ENCODE measurements at regions of chr7 and their contacts with region 1.

Region 1: DNA sequence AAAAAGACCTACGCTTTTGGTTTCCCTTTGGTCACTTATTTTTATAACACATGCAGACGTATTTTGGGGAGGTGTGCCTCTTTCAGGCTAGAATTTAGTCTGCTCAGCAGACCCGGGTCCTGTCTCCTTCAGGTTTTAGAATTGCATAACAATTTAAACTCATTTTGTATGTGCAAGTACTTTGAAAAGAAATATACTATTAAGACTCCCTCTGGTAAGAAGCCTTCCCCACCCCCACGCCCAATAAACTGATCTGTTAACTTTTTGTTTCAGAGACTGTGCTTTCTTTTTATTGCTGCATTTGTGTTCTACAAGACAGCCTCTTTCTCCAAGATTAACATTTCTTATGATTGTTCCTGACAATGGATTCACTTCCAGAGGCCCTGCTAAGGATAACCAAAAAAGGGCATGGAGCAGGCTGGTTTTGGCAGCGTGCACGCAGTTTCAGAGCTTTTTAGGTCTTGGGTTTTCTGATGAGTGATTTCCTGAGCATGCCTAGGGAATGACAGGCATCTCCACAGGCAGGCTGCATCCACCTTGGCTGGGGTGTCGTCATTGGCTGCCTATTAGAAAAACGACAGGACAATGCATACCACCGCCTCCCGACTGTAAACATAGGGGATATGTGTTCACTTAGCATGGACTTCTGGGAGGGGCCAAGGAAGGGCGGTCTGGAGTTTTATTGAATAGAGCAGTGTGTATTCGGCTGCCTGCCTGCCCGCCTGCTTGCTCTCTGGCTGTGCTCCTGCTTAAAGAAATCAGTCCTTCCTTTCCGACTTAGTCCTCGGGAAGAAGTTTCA is at the start of gene CALD1:
- DNase-seq: peak; percentile 99
- H3K4me3 ChIP-seq: peak within 1 kb of the TSS; percentile 83
- CTCF ChIP-seq: no peak

Region 2: DNA sequence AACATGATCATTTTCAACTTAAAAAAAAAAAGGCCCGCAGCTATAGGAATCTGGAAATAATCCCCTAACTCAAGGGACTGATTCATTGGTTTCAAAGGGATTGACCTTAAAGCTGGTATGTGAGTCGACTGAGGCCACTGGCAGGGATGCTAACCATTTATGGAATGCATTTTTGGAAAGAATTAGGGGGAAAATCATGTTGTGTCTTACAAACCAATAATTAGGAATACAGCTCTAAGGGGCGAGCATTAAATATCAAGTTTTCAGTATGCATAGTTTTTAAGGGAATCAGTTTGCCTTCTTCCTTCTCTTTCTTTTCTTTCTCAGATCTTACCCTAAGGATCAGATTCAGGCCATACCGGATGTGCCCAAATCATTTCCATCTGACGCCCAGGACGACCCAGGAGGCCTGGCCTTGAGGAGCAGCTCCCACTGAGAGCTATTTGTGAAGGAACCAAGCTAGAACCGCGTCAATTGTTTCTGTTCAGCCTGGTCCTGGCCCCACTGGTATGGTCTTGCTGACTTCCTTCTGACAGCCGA is 83.8 kb before region 1 on chr7:
- CTCF ChIA-PET with region 1: interaction called, 80 read pairs
- POLR2A ChIA-PET with region 1: interaction called, 127 read pairs
- DNase-seq: peak; percentile 73
- H3K4me3 ChIP-seq: no peak overlapping the region
- CTCF ChIP-seq: no peak

Region 3: DNA sequence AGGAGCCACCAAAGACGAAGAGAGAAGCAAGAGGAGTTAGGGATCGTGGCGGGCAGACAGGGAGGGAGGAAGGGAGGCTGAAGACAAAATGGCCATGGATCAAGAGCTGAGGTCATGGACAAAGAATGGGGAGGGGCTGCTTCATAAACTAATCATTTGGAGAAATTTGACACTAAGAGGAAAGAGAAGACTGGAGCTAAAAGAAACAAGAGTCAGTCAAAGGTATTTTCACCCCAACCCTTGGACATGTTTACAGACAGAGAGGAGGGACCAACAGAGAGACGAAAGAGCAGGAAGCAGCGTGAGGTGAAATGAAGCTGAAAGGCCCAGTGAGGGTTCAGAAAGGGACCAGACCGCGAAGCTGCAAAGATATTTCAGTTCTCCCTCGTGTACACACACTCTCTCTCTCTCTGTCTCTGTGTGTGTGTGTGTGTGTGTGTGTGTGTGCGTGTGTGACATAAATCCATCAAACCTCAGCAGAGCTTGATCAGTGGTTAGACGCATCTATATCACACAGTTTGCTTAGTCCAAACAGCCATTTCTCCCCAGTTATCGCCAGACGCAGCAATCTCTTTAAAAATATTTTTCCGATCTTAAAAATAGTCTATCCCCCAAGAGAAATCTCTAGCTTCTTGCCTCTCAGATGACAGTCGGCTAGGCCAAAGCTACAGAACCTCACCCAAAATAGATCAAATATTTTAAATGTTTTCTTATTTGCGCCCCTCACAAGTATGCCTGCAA is 12.2 kb before region 1 on chr7:
- CTCF ChIA-PET with region 1: no interaction called
- POLR2A ChIA-PET with region 1: interaction called, 16 read pairs
- DNase-seq: no peak
- H3K4me3 ChIP-seq: no peak overlapping the region
- CTCF ChIP-seq: no peak

Region 4: DNA sequence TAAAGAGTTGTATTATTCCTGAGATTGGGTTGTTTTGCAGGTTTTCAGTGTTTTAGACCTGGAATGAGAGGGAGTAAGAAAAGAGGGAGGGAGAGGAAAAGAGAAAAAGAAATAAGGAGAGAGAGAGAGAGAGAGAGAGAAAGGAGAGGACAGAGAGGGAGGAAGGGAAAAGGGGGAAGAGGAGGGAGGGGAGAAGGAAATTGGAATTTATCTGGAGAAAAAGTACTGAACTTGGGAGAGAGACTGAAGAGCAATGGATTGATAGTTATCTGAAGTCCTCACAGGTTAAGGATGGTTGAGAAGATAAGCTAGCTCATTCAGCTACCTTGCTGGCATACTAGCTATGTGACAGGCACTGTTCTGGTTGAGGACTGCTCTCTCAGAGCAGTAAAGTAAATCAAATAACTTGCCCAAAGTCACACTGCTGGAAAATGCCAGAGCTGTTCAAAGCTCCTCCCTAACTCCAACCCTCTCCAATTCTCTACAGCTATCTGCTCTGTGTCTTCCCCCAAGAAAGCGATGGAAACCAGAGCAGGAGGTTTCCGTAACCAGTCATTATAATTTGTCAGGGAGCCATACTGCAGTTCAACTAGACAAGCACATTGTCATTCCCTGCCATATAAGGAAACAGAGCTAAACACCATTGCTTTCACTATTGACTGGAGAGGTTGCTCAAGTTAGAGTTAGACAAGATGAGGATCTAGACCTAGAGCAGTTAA is 11.0 kb after region 1 on chr7:
- CTCF ChIA-PET with region 1: interaction called, 3 read pairs
- POLR2A ChIA-PET with region 1: interaction called, 11 read pairs
- DNase-seq: no peak
- H3K4me3 ChIP-seq: no peak overlapping the region
- CTCF ChIP-seq: no peak

Region 5: DNA sequence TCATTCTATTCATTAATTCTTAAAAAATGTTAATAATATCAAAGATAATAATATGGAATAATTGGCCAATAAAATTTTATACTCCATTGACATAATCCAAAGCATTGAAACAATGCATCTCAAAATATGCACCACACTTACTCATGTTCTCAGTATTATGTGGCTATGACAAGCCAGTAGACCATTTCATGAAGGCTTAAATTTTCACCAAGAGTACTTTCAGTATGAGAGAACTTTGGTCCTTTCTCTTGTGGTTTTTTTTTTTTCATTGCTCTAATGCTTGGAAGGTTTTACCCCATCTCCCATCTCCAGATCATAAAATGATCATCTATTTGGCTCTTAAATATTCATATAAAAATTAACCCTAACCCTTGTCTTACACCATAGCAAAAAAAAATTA is 323.2 kb after region 1 on chr7:
- CTCF ChIA-PET with region 1: no interaction called
- POLR2A ChIA-PET with region 1: no interaction called
- DNase-seq: no peak
- H3K4me3 ChIP-seq: no peak overlapping the region
- CTCF ChIP-seq: no peak